GM18951 (cell line): ENCODE measurements at regions of chr21 and their contacts with region 1.

Region 1: GRCh38 chr21:36141513-36141925 is 6.6 kb downstream of the CBR3 start:
- POLR2A ChIP-seq: no peak

Region 2: DNA sequence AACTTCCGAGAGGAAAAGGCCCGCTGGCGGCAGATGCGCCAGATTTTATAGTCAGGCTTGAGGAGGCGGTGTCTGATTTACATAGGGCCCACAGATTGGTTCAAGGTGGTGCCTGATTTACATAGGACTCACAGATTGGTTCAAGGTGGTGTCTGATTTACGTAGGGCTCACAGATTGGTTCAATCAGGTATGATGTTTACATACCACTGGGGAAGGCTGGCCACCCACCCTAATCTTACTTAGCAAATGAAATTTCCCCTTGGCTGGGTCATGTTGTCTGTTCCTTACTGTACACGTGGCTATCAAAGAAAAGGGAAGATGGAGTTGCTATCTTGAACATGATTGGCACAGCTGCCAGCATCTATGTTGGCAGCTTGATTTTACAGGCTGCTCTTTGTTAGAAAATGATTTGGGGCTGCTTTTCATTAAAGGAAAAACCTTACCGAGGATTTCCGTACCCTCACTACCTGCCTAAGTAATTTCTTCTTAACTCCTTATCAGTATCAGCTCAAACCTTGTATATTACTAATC is 177.5 kb before region 1 on chr21:
- in situ Hi-C with region 1: no loop called
- POLR2A ChIP-seq: no peak

Region 3: GRCh38 chr21:36330904-36331303 is 189.4 kb after region 1 on chr21:
- in situ Hi-C with region 1: loop called (anchors 5 kb)
- POLR2A ChIP-seq: no peak